Dendritic cell treated with granulocyte-macrophage colony-stimulating factor and Interleukin-4, amounts not matched to agents 40 ng/mL and 50 ng/mL, for 4 days (primary cell): ENCODE measurements at regions of chr1 and their contacts with region 1.

Region 1: DNA sequence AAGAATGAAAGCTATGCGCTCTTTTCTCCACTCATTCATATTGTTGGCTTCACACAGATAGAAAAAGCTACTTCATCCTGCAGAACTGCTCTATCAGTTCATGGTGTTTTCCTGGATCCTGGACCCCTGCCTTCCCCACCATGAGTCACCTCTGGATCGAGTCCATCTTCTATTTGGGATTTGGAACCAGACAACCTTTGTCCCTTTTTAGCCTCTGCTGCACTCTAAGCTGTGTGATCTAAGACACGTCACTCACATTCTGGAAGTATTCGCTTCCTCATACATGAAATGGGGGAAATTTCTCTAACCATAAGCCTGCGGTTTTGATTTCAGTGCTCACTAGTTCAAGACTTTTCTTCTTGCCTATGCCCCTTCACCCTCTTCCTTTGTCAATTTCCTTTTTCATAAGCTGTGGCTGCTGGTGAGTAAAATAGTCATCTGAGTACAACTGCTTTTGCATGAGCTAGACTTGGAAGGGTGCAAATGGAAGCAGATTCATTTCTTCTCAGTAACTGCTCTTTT is 14.1 kb upstream of the DEGS1 start:
- H3K4me3 Mint-ChIP-seq: peak overlapping the region; percentile 54
- H3K27ac Mint-ChIP-seq: peak overlapping the region; percentile 74
- H3K4me1 Mint-ChIP-seq: peaks cover 40% of the 10 kb centered on the region
- H3K27me3 Mint-ChIP-seq: peaks cover 2% of the 10 kb centered on the region

Region 2: GRCh38 chr1:224182866-224183590 is 14.1 kb after region 1 on chr1 and contains the start of gene DEGS1:
- intact Hi-C with region 1: loop called (anchors 2 kb)
- H3K4me3 Mint-ChIP-seq: peak within 1 kb of the TSS; percentile 95
- H3K27ac Mint-ChIP-seq: peak within 1 kb of the TSS; percentile 90
- H3K4me1 Mint-ChIP-seq: peaks cover 34% of the 10 kb centered on the region
- H3K27me3 Mint-ChIP-seq: no peaks in the 10 kb centered on the region

Region 3: GRCh38 chr1:224245188-224245587 is 76.3 kb after region 1 on chr1:
- intact Hi-C with region 1: loop called (anchors 5 kb)
- H3K4me3 Mint-ChIP-seq: no peak overlapping the region
- H3K27ac Mint-ChIP-seq: peak overlapping the region; percentile 80
- H3K4me1 Mint-ChIP-seq: peaks cover 12% of the 10 kb centered on the region
- H3K27me3 Mint-ChIP-seq: no peaks in the 10 kb centered on the region